AG04450 (cell line): ENCODE measurements at regions of chr1 and their contacts with region 1.

Region 1: GRCh38 chr1:12078938-12079861 is 16.1 kb downstream of the TNFRSF8 start:
- DNase-seq: peak; percentile 13
- H3K4me3 ChIP-seq: no peak overlapping the region
- H3K27ac ChIP-seq: no peak overlapping the region
- H3K27me3 ChIP-seq: peaks cover 9% of the 10 kb centered on the region
- CTCF ChIP-seq: peak; percentile 75

Region 2: DNA sequence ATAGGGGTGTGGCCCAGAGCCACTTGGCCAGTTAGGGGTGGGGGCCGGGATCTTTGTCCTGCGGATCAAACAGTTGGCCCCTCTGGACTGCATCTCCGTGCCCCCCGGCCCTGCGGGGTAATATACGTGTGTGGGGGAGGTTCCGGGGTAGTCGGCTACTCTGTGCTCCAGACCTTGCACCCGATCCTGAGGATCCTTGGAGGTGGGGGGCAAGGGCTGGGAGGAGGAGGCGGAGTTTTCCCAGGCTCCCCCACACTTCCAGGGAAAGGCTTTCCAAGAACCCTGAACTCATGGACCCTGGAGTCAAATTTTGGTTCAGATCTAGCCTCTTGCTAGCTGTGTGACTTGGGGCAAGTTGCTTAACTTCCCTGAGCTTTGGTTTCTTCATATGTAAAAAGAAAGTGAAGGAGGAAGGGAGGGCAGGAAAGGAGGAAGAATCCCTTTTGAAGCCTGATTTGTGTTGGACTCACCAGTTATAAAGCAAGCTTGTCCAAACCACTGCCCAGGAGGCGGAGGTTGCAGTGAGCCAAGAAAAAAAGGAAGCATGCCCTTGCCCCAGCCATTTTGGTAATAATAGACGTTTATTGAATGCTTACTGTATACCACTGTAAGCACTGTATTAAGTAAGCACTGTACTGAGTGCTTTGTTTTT is 59.2 kb before region 1 on chr1:
- CTCF ChIA-PET with region 1: interaction called, 18 read pairs
- POLR2A ChIA-PET with region 1: interaction called, 8 read pairs
- DNase-seq: no peak
- H3K4me3 ChIP-seq: peak overlapping the region; percentile 88
- H3K27ac ChIP-seq: no peak overlapping the region
- H3K27me3 ChIP-seq: no peaks in the 10 kb centered on the region
- CTCF ChIP-seq: no peak